Endothelial cell of umbilical vein (primary cell): ENCODE measurements at regions of chr7 and their contacts with region 1.

Region 1: DNA sequence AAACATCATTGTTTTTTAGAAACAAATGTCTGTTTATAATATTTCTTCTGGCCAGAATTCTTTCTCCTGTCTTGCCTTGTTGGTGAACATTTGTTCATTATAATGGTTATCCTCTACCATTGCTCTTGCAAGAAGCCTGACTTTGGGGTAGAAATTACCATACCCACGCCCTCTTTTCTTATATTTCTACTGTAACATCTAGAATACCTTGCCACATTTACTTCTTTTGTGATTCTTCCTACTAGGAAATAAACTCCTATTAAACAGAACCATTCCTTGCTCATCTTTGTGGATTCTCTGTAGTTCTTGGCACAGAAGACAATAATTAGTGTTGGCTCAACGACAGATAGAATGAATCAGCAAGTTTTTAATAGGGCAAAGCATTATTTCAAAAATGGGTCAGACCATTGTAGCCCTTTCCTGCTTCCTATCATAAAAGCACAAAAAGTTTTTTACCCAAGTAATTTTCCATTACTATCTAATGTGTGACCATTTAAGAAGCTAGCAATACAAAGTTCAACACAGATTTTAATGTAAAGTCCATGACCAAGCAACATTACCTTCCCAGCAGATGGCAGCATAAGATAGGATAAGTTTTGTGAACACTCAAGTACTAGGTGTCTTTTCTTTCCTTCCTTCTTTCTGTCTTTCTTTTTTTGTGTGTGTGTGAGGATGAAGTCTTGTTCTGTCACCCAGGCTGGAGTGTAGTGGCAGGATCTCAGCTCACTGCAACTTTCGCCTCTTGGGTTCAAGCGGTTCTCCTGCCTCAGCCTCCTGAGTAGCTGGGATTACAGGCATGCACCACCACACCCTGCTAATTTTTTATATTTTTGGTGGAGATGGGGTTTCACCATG is 270.4 kb downstream of the HGF start:
- DNase-seq: peak; percentile 91
- H3K4me3 ChIP-seq: no peak overlapping the region
- H3K27ac ChIP-seq: no peak overlapping the region
- H3K4me1 ChIP-seq: peaks cover 14% of the 10 kb centered on the region
- H3K27me3 ChIP-seq: no peaks in the 10 kb centered on the region
- CTCF ChIP-seq: peak; percentile 36
- POLR2A ChIP-seq: no peak

Region 2: DNA sequence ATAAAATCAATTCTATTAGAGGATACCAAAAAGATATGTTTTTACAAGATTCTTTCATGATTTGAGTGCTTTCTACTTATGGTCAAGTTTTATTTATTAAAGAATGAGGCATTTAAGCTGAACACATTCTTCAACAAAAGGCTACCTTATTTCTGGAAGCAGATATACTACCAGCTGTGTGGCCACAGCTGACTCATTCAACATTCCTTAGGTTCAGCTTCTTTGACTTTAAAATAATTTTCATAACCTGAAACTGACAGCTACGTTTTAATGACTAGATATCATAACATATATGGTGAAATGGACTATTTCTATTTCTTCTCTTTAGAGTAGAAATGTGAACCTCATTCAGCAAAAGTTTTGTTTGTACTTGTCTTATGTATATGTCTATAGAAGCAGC is 166.5 kb before region 1 on chr7:
- CTCF ChIA-PET with region 1: no interaction called
- POLR2A ChIA-PET with region 1: no interaction called
- dilution Hi-C with region 1: no loop called
- intact Hi-C with region 1: no loop called
- DNase-seq: peak; percentile 36
- H3K4me3 ChIP-seq: no peak overlapping the region
- H3K27ac ChIP-seq: no peak overlapping the region
- H3K4me1 ChIP-seq: peaks cover 25% of the 10 kb centered on the region
- H3K27me3 ChIP-seq: no peaks in the 10 kb centered on the region
- CTCF ChIP-seq: no peak
- POLR2A ChIP-seq: no peak

Region 3: GRCh38 chr7:81482600-81483186 is 16.8 kb before region 1 on chr7:
- CTCF ChIA-PET with region 1: interaction called, 34 read pairs
- POLR2A ChIA-PET with region 1: no interaction called
- dilution Hi-C with region 1: no loop called
- intact Hi-C with region 1: no loop called
- DNase-seq: peak; percentile 40
- H3K4me3 ChIP-seq: no peak overlapping the region
- H3K27ac ChIP-seq: no peak overlapping the region
- H3K4me1 ChIP-seq: no peaks in the 10 kb centered on the region
- H3K27me3 ChIP-seq: no peaks in the 10 kb centered on the region
- CTCF ChIP-seq: peak; percentile 14 to 27
- POLR2A ChIP-seq: no peak

Region 4: DNA sequence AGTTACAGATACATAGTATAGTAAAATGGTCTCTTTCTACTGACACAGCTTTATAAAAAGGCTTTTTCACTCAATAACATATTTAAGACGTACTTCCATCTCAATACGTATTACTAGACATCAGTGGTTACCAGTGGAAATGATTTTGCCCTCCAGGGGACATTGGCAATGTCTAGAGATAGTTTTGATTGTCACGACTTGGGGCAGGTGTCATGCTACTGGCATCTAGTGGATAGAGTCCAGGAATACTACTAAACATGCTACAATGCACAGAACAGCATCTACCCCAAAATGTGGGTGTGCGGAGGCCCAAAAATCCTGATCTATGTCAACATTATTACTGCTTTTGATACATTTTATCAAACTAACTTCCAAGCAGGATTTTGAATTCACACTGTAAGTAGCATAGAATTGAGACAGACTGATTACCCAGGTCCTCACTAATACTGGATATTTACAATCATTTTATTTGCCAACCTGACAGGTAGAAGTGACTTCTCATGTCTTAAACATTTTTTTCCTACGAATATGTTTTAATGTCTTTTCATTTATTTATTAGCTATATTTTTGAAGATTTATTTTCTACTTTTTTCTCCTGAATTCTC is 216.6 kb after region 1 on chr7:
- CTCF ChIA-PET with region 1: interaction called, 48 read pairs
- POLR2A ChIA-PET with region 1: no interaction called
- dilution Hi-C with region 1: no loop called
- intact Hi-C with region 1: loop called (anchors 1 kb)
- DNase-seq: peak; percentile 30
- H3K4me3 ChIP-seq: no peak overlapping the region
- H3K27ac ChIP-seq: no peak overlapping the region
- H3K4me1 ChIP-seq: no peaks in the 10 kb centered on the region
- H3K27me3 ChIP-seq: no peaks in the 10 kb centered on the region
- CTCF ChIP-seq: peak; percentile 13 to 26
- POLR2A ChIP-seq: no peak

Region 5: DNA sequence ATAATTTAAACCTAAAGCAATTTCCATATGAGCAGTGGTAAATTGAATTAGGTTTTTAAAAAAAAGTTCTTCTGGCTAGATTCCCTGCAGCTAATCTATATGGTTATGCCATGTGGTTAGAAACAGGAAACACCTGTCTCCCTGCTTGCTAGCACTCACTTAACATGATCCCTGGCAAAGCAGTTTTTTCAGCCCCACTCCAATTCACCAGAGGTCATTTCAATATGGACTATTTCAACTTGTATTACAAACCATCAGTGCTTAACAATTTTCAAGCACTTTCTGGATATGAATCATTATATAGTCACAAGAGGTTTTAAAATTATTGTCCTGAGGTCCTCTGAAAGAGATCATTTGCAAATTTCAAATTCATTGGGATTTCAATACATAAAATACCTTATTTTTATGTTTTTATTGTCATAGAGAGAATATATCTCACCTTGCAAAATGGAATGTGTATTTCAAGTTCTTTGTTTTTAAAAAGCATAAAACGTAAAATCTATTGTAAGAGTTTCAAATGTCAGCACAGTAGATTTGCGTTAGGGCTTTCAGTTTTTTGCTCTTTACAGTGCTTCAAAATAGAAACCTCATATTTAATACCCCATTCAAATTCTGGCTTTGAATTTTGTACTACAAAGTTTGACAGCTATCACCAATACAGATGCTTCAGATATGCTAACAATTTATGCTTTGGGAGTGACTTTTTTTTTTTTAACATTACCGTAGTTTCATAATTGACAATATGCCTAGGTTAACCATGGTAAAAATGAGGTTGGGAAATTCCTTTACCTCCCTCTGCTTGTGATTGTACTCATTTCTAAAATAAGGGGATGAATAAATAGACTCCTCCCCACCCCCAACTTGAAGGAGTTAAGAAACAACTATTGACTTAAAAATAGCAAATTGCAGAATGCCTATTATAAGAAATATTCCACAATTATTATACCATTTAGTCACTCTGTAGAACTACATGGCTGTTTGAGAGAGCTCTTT is 387.9 kb after region 1 on chr7:
- CTCF ChIA-PET with region 1: no interaction called
- POLR2A ChIA-PET with region 1: no interaction called
- dilution Hi-C with region 1: no loop called
- intact Hi-C with region 1: loop called (anchors 5 kb)
- DNase-seq: peak; percentile 86
- H3K4me3 ChIP-seq: no peak overlapping the region
- H3K27ac ChIP-seq: no peak overlapping the region
- H3K4me1 ChIP-seq: peaks cover 10% of the 10 kb centered on the region
- H3K27me3 ChIP-seq: peaks cover 0 to 2% of the 10 kb centered on the region in 2 experiments
- CTCF ChIP-seq: no peak
- POLR2A ChIP-seq: peak; percentile 30

Region 6: DNA sequence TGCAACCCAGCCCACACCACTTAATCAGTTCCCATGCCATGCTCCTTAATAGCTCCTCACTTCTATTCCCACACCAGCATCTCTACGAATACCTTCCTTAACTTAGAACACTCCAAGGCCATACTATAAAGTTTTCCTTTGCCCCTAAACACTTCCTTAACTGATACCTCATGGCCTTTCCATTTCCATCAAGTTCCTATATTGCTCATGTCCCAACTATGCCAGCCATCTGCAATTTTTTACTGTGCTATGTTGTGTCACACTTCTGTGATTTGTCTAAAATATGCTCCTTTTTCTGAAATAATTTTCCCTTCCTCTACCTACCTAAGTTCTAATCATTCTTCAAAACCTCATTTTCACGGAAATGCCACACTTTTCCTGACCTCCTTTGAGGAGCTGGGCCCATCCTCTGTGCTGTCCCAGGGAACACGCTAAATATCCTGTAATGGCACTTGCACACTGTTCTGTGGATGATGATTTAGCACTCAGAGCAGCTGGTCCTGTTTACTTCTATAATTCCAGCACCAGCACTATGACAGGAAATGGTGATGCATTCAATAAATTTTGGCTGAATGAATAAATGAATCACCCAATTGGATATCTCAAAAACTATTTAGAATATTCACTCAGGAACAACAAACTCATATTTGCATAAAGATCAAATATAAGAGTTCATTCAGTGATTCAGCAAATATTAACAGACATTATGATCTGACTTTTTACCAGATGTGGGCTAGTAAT is 536.8 kb after region 1 on chr7:
- CTCF ChIA-PET with region 1: interaction called, 11 read pairs
- POLR2A ChIA-PET with region 1: no interaction called
- dilution Hi-C with region 1: no loop called
- intact Hi-C with region 1: loop called (anchors 1 kb)
- DNase-seq: peak; percentile 90
- H3K4me3 ChIP-seq: peak overlapping the region in 1 of 3 experiments; percentile 28
- H3K27ac ChIP-seq: peak overlapping the region; percentile 90
- H3K4me1 ChIP-seq: peaks cover 58% of the 10 kb centered on the region
- H3K27me3 ChIP-seq: no peaks in the 10 kb centered on the region
- CTCF ChIP-seq: no peak
- POLR2A ChIP-seq: peak; percentile 12

Region 7: GRCh38 chr7:82481499-82482097 is 982.1 kb after region 1 on chr7:
- CTCF ChIA-PET with region 1: interaction called, 8 read pairs
- POLR2A ChIA-PET with region 1: no interaction called
- dilution Hi-C with region 1: no loop called
- intact Hi-C with region 1: loop called (anchors 5 kb)
- DNase-seq: peak; percentile 47
- H3K4me3 ChIP-seq: no peak overlapping the region
- H3K27ac ChIP-seq: no peak overlapping the region
- H3K4me1 ChIP-seq: no peaks in the 10 kb centered on the region
- H3K27me3 ChIP-seq: no peaks in the 10 kb centered on the region
- CTCF ChIP-seq: peak; percentile 33 to 55
- POLR2A ChIP-seq: no peak

Region 8: DNA sequence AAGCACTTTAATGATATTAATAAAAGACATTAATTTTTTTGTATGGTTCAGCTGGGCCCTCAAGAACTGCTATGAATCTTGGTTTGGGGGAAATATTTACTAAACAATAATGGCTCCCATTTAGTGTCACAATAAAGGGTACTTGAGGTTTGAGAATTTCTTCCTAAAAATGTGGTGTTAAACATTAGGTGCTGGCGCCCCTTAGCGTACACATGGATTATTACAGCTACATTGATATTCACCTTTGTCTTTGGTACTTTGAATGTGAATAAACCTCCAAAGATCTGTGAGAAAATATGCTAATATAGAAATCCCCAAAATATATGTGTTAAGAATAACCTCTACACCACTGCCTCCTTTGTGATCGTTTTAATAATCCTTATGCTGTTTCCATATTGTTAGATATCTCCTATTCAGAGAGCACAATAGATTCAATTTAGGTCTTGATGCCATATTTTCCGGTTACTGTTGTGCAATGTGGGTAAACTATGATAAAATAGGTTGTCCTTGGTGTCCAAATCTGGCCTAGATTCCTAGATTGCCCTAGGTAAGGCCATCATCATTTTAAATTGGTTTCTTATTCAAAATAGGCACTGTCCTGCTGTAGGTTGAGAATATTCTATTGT is 1105.9 kb after region 1 on chr7:
- CTCF ChIA-PET with region 1: interaction called, 30 read pairs
- POLR2A ChIA-PET with region 1: no interaction called
- dilution Hi-C with region 1: no loop called
- intact Hi-C with region 1: no loop called
- DNase-seq: peak; percentile 62
- H3K4me3 ChIP-seq: no peak overlapping the region
- H3K27ac ChIP-seq: no peak overlapping the region
- H3K4me1 ChIP-seq: no peaks in the 10 kb centered on the region
- H3K27me3 ChIP-seq: no peaks in the 10 kb centered on the region
- CTCF ChIP-seq: peak; percentile 44 to 57
- POLR2A ChIP-seq: no peak